PC-9 (cell line): ENCODE measurements at regions of chr12 and their contacts with region 1.

Region 1: GRCh38 chr12:80792861-80793260 is 76.1 kb downstream of the MYF5 start:
- DNase-seq: no peak
- H3K4me3 ChIP-seq: no peak overlapping the region
- H3K27ac ChIP-seq: no peak overlapping the region
- H3K4me1 ChIP-seq: no peaks in the 10 kb centered on the region
- H3K27me3 ChIP-seq: no peaks in the 10 kb centered on the region
- CTCF ChIP-seq: no peak

Region 2: DNA sequence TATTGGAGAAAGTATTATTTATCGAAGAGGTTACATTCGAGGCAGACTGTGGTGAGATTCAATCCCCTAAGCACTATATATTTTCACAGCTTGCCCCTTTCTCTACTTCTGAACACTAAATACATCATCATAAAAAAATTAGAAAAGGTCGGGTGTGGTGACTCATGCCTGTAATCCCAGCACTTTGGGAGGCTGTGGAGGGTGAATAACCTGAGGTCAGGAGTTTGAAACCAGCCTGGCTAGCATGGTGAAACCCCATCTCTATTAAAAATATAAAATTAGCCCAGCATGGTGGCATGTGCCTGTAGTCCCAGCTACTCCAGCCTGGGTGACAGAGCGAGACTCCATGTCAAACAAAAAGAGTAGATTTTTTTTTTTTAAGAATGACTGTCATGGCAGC is 156.0 kb before region 1 on chr12:
- CTCF ChIA-PET with region 1: no interaction called
- POLR2A ChIA-PET with region 1: no interaction called
- intact Hi-C with region 1: no loop called
- DNase-seq: no peak
- H3K4me3 ChIP-seq: no peak overlapping the region
- H3K27ac ChIP-seq: no peak overlapping the region
- H3K4me1 ChIP-seq: no peaks in the 10 kb centered on the region
- H3K27me3 ChIP-seq: no peaks in the 10 kb centered on the region
- CTCF ChIP-seq: no peak

Region 3: DNA sequence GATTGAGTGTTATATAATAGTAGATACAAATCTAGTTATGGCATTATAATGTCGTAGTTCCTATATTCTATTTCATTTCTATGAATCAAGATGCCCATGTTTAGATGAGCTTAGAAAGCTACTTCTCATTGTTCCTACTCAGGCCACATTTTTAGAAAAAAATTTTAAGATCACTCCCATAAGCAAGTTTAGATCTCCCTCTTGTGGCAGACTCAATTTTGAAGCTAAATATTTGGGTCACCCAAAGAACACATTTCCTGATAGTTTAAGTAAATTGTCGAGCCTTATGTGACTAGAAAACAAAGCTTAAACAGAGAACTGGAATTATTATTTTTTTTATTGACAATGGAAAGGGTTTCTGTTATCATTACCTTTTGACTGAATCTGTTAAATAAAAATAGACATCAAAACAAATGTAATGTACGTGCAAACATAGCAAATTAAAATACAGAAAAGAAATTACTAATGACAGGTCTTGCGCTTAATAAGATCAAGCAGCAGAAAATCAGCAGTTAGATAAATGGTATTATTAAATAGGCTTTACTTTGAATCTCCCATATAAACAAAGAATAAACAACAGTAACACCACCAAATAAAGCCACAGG is 465.2 kb after region 1 on chr12:
- CTCF ChIA-PET with region 1: no interaction called
- POLR2A ChIA-PET with region 1: interaction called, 10 read pairs
- intact Hi-C with region 1: no loop called
- DNase-seq: peak in 1 of 2 experiments; percentile 40
- H3K4me3 ChIP-seq: no peak overlapping the region
- H3K27ac ChIP-seq: no peak overlapping the region
- H3K4me1 ChIP-seq: no peaks in the 10 kb centered on the region
- H3K27me3 ChIP-seq: no peaks in the 10 kb centered on the region
- CTCF ChIP-seq: peak; percentile 76